Endothelial cell of umbilical vein (primary cell): ENCODE measurements at regions of chr12 and their contacts with region 1.

Region 1: GRCh38 chr12:19546611-19547162 is 107.4 kb downstream of the AEBP2 start:
- DNase-seq: peak; percentile 92
- H3K4me3 ChIP-seq: peak overlapping the region in 1 of 3 experiments; percentile 22
- H3K27ac ChIP-seq: peak overlapping the region; percentile 84
- H3K4me1 ChIP-seq: peaks cover 23% of the 10 kb centered on the region
- H3K27me3 ChIP-seq: no peaks in the 10 kb centered on the region
- CTCF ChIP-seq: no peak
- POLR2A ChIP-seq: no peak

Region 2: DNA sequence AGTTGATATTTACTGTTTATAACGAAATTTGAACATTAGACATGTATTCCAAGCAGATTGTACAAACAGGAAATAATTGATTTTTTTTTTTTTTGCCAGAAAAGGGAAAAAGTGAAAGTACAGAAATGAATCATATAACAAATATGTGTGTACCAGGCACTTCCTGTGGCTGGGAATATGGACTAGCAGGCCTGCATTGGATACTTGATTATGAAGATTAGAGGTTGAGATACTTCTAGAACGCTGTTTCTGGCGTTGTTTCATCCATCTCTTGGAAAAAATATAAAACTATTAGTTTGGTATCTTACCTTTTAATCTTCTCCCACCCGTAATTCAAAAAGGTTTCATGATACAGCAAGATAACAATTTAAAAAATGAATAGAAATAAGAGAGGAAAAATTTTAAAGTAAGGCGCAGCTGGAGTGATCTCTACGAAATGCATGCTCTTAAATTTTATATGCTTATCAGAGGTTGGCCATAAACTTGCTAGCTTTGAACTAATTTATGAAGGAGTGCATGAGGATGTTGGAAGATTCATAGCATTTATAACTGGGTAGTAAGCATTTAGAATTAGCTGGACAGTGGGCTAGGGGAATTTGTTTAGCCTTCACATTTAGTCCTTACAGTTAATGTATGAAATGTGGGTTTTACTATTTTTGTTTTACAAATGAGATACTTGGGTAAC is 16.6 kb before region 1 on chr12:
- CTCF ChIA-PET with region 1: interaction called, 6 read pairs
- POLR2A ChIA-PET with region 1: interaction called, 3 read pairs
- dilution Hi-C with region 1: no loop called
- intact Hi-C with region 1: loop called (anchors 1 kb)
- DNase-seq: peak; percentile 82
- H3K4me3 ChIP-seq: peak overlapping the region in 1 of 3 experiments; percentile 17
- H3K27ac ChIP-seq: peak overlapping the region; percentile 84
- H3K4me1 ChIP-seq: peaks cover 36% of the 10 kb centered on the region
- H3K27me3 ChIP-seq: no peaks in the 10 kb centered on the region
- CTCF ChIP-seq: no peak
- POLR2A ChIP-seq: peak; percentile 50